Common myeloid progenitor, CD34-positive (primary cell): ENCODE measurements at regions of chr4 and their contacts with region 1.

Region 1: DNA sequence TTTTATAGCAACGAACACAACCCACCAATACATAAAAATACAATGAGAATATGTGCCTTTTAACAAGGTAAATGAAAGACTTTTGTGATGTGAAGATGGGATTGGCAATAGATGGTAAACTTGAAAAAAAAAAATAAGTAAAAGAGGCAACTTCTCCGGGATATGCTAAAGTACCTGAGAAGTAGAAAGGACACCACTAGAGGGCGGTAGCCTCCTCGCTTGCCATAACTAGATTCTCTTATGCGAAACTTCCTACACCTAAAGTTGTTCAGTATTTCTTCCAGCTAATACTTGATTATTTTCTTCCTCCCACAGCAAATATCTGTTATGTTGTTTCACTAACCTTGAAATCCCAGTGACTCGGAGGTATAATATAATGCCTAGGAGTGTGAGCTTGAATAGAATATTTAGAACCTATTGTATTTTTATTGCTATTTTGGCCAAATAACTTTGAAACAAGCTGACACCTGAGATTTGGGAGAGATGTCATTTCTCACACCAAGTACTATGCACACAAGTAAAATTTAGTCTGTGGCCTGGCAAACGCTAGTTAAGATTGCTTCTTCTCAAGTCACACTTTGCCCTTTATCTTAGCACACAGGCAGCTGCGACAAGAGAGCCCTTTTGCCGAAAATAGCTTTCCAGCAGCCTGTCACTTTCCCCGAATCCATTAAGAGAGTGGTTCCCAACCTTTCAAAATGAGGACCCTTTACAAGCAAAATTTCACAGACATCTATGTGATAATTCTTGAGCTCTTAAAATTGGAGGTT is 44.9 kb upstream of the PDLIM5 start:
- DNase-seq: peak; percentile 87 to 93 (median 88)
- H3K4me3 ChIP-seq: no peak overlapping the region
- H3K27ac ChIP-seq: no peak overlapping the region
- H3K4me1 ChIP-seq: no peaks in the 10 kb centered on the region
- H3K27me3 ChIP-seq: no peaks in the 10 kb centered on the region

Region 2: DNA sequence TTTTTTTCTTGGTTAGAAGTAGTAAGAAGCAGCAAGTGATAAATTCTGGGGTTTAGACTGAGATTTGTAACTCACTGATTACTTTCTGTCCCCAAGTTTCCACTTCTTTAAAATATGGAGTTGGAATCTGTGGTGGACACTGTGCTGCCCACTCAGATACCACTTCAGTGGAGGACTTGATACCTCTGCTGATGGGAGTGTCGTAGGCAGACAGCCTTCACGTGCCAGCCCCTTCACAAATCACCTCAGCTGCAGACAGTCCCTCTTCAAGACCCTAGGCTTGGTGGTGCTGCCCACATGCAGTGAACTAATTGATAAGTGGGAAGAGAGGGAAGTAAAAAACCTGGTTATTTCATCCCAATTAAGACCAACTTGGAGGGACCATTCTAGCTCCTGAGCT is 184.4 kb after region 1 on chr4:
- CTCF ChIA-PET with region 1: interaction called, 11 read pairs
- POLR2A ChIA-PET with region 1: interaction called, 3 read pairs
- DNase-seq: no peak
- H3K4me3 ChIP-seq: no peak overlapping the region
- H3K27ac ChIP-seq: no peak overlapping the region
- H3K4me1 ChIP-seq: peaks cover 0 to 6% (median 0%) of the 10 kb centered on the region in 4 experiments
- H3K27me3 ChIP-seq: no peaks in the 10 kb centered on the region

Region 3: GRCh38 chr4:94598758-94599157 is 191.9 kb after region 1 on chr4:
- CTCF ChIA-PET with region 1: interaction called, 13 read pairs
- POLR2A ChIA-PET with region 1: no interaction called
- DNase-seq: no peak
- H3K4me3 ChIP-seq: no peak overlapping the region
- H3K27ac ChIP-seq: no peak overlapping the region
- H3K4me1 ChIP-seq: peaks cover 0 to 6% (median 0%) of the 10 kb centered on the region in 4 experiments
- H3K27me3 ChIP-seq: no peaks in the 10 kb centered on the region